Colonic mucosa (tissue), 4 donors: ENCODE measurements at regions of chr12 and their contacts with region 1.

Region 1: DNA sequence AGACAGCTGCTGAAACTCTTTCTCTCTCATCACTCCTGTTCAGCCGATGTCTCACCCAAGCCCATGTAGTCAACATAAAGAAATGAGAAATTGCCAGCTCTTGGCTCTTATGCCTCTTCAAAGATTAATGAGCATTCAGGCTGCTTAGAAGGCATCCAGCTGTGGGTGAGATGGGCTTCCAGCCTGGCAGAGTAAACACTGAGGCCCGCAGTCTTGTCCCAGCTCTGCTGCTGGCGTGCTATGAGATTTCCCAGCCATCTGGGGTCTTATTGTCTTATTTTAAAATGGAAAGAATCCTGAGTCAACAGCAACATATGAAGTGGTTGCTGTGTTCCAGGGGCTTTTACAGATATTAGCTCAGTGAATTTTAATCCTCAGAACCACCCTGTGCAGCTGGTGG is 12.6 kb downstream of the RXYLT1 start:
- DNase-seq: no peak
- H3K4me3 ChIP-seq: no peak overlapping the region
- H3K27ac ChIP-seq: no peak overlapping the region
- H3K4me1 ChIP-seq: no peaks in the 10 kb centered on the region
- H3K27me3 ChIP-seq: no peaks in the 10 kb centered on the region
- CTCF ChIP-seq: no peak

Region 2: GRCh38 chr12:63420206-63420644 is 372.1 kb before region 1 on chr12:
- intact Hi-C with region 1: loop called (anchors 10 kb)
- DNase-seq: peak; percentile 47
- H3K4me3 ChIP-seq: no peak overlapping the region
- H3K27ac ChIP-seq: no peak overlapping the region
- H3K4me1 ChIP-seq: no peaks in the 10 kb centered on the region
- H3K27me3 ChIP-seq: no peaks in the 10 kb centered on the region
- CTCF ChIP-seq: peak; percentile 42

Region 3: DNA sequence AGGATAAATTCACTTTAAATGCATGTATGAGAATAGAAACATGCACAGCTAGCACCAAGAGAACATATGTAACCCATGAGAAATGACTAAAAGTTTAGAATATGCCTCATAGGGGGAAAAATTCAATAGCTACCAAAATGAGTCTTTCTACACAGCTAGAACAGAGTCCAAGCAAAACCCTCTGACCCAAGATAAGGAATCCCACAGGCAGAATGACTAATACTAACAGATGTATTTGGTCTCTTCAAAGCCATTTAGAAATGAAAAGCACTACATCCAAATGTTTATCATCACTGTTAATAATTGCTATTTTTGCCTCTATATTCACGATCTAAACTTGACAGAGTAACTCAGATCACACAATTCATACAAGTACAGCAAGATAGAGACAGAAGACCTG is 385.8 kb after region 1 on chr12:
- intact Hi-C with region 1: no loop called
- DNase-seq: no peak
- H3K4me3 ChIP-seq: no peak overlapping the region
- H3K27ac ChIP-seq: no peak overlapping the region
- H3K4me1 ChIP-seq: no peaks in the 10 kb centered on the region
- H3K27me3 ChIP-seq: no peaks in the 10 kb centered on the region
- CTCF ChIP-seq: no peak